ENCODE measurements at regions of chr4 and their contacts with region 1.

Region 1: GRCh38 chr4:151362404-151363164 is 37.2 kb upstream of the SH3D19 start:
- DNase-seq: peak; percentile 42 to 94 (median 84)

Region 2: GRCh38 chr4:151117371-151117962 is 245.1 kb before region 1 on chr4:
- intact Hi-C with region 1: loop called (anchors 5 kb)
- DNase-seq: peak in 37 of 42 donors; percentile 17 to 86 (median 64)

Region 3: GRCh38 chr4:151276787-151277562 is 85.6 kb before region 1 on chr4 and contains the start of gene PRSS48:
- intact Hi-C with region 1: loop called (anchors 2 kb)
- DNase-seq: peak; percentile 64 to 96 (median 87)